Left cardiac atrium (tissue), 4 donors: ENCODE measurements at regions of chr1 and their contacts with region 1.

Region 1: DNA sequence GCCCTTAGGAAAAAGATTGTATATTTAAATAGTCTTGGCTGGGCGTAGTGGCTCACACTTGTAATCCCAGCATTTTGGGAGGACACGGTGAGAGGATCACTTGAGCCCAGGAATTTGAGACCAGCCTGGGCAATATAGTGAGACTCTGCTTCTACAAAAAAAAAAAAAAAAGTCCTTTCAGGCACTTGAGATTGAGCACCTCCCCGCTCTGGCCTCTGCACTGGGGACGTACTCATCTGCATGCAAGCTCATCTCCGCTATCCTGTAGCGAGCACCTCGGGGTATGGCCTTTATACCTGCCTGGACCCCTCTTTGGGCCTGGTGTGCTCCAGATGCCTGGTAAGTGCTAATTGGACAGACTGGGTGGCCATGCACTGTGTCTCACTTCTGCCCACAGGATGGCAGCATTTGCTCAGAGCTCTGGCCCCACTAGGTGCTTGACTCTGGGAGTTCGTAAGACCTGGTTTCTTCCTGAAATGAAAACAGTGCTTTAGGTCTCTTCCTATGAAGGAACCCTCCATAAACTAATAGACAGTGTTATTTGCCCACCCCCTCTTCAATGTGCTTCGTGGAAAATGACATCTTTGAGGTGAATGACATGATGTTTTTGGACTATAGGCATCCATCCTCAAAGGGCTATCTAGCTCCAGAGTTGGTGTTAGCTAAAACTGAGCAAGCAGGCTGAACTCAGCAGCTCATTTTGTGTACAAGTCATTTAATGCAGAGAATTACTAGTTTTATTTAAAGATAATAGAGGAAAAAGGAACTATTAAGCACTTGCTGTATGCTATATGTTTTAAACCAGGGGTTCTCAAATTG is 61.7 kb upstream of the ADAR start:
- DNase-seq: peak; percentile 75
- ATAC-seq: peak; percentile 96 to 99

Region 2: GRCh38 chr1:154760469-154760933 is 90.8 kb after region 1 on chr1:
- intact Hi-C with region 1: loop called in 1 of 2 experiments (anchors 5 kb)
- DNase-seq: peak; percentile 72
- ATAC-seq: peak; percentile 86 to 95

Region 3: DNA sequence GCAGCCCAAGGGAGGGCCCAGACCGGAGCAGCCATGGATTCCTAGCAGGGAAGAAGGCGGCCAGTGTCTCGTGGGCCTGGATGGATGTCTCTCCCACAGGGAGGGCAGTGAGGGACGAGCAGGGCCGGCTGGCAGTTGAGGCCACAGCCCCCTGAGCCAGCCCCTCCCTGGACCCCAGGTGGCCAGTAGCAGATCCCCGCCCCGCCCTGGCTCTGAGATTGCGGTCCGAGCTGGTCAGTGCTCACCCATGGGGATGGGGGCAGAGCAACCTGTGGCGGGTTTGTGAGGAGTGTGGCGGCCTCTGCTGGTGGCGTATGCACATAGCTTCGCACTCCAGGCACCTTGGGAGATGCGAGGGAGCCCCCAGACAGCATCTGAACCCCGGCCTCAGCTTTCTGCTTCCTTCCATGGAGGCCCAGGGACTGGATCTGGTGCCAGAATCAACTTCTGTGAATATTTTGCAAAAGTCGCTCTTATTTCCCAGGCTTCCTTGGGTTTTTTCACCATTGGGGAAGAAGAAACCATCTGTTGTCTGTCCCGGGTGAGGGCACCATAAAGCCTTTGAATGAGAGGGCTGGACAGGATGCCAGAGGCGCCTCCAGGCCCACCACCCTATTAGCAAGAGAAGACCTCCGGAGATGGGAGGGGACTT is 208.8 kb after region 1 on chr1:
- intact Hi-C with region 1: loop called (anchors 2 to 5 kb)
- DNase-seq: peak; percentile 84
- ATAC-seq: peak; percentile 92 to 93

Region 4: DNA sequence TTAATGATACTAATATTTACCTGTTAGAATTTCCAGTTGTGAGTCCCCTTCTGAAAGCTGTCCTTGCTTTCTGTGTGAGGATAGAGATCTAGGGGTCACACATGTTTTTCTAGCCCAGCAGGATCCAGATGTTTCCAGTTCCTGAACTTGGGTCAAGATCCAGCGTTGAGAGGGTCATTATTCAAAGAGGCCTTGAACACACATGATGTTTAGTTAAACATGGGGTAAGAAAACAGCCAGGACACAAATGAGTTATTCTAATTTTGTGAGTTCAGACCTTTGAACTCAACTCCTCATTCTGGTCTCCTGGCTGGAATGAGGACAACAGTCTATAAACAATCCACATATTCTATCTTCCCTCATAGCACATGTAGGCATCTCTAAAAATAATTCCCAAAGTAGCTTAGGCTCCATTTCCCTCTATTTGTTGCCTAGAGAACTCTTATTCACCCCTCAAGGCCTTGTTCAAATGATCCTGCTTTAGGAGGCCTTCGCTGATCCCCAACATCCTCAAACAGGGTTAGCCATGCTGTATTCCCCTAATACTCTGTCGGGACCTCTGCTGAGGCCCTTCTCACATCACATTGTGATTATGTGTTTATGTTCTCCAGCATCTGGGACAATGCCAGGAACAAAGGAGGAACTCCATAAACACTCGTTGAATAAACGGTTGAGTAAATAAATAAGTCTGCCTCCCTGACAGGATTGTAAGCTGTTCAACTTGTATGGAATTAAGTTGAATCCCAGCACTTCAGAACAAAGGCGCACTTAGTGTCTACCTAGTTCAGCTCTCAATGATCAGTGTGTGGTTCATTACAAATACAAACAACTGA is 215.4 kb after region 1 on chr1:
- intact Hi-C with region 1: loop called in 1 of 2 experiments (anchors 5 kb)
- DNase-seq: no peak
- ATAC-seq: no peak

Region 5: DNA sequence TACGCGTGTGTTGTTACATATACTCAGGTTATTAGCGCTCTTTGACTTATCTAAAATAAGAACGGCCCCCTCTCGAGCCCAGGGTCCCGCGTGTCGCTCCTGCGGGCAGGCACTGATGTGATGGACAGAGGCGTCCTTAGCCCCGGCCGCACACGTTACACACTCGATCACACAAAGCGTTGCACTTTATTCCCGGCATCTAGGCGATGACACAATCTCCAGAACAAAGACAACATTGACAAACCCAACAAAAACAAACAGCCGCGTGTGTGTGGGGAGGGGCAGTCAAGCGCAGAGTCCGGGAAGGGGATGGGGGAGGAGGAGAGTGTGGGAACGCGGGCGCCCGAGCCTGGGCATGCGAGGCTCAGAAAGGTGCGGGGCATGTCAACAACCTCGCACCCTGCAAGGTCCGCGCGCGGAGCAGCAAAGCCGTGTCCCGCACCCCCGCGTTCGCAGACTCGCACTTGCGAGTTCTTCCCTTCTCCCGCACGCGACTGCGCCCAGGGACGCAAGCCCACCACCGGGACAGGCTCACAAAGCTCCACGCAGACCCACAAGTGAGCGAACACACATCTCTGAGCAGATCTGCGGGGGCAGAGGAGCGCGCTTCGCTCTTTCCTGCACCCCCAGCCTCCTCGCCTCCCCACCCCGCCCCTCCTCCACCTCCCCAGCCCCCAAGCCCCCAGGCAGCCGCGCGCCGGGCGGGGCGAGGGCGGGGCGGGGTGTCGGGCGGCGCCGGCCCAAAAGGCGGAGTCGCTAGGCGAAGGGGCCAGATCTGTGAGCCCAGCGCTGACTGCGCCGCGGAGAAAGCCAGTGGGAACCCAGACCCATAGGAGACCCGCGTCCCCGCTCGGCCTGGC is 457.7 kb after region 1 on chr1 and contains the start of gene EFNA1:
- intact Hi-C with region 1: no loop called
- DNase-seq: peak; percentile 82
- ATAC-seq: peak; percentile 74 to 75
- total RNA-seq, gene EFNA1: 33.3 to 39.1 TPM